HCT116 (cell line): ENCODE measurements at regions of chr19 and their contacts with region 1.

Region 1: GRCh38 chr19:51777570-51778462 is 16.8 kb downstream of the FPR2 start:
- DNase-seq: peak; percentile 83
- ATAC-seq: peak; percentile 95
- H3K4me3 ChIP-seq: no peak overlapping the region
- H3K27ac ChIP-seq: no peak overlapping the region
- H3K4me1 ChIP-seq: peaks cover 0 to 4% of the 10 kb centered on the region in 2 experiments; a peak in 1 of 4 replicates
- H3K27me3 ChIP-seq: no peaks in the 10 kb centered on the region
- CTCF ChIP-seq: peak; percentile 57 to 71 (median 71); a peak in 5 of 6 replicates
- POLR2A ChIP-seq: no peak
- RAD21 ChIP-seq: peak; percentile 83

Region 2: DNA sequence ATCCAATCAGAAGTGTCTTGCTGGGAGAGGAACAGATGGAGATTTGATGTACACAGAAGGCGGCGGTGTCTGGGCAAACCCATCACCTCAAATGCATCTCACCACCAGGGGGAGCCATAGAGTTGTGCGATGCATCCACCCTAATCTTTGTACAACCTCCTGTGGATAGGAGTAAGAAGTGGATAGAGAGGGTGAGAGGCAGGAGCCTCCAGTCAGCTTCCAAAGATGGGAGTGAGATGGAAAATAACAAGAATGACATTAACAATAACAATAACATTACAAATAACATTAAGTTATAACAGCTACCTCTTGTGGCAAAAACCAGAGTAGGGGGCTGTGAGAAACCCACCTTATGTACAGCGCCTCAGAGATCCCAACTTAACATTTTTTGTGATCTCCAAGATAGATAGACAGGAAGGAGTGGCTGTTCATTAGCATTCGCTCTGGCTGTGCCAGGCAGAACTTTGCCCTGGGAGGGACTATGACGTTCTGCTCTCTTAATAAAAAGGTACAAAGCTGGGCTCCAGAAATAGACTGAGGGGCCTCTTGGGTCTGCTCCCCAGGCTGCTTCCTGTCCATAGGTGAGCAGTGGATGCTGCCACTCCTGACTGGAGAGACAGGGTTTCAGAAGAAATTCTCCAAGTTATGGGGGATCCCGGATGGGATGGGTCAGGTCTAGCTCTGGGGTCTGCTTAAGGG is 304.7 kb before region 1 on chr19:
- CTCF ChIA-PET with region 1: interaction called, 12 read pairs
- POLR2A ChIA-PET with region 1: no interaction called
- RAD21 ChIA-PET with region 1: no interaction called
- intact Hi-C with region 1: loop called (anchors 1 kb)
- DNase-seq: peak; percentile 59
- ATAC-seq: peak; percentile 95
- H3K4me3 ChIP-seq: no peak overlapping the region
- H3K27ac ChIP-seq: no peak overlapping the region
- H3K4me1 ChIP-seq: peaks cover 4 to 13% of the 10 kb centered on the region in 2 experiments; a peak in 2 of 4 replicates
- H3K27me3 ChIP-seq: peaks cover 5% of the 10 kb centered on the region; the same call in 1 of the 2 replicates
- CTCF ChIP-seq: peak; percentile 79 to 85 (median 82)
- POLR2A ChIP-seq: no peak
- RAD21 ChIP-seq: peak; percentile 71

Region 3: DNA sequence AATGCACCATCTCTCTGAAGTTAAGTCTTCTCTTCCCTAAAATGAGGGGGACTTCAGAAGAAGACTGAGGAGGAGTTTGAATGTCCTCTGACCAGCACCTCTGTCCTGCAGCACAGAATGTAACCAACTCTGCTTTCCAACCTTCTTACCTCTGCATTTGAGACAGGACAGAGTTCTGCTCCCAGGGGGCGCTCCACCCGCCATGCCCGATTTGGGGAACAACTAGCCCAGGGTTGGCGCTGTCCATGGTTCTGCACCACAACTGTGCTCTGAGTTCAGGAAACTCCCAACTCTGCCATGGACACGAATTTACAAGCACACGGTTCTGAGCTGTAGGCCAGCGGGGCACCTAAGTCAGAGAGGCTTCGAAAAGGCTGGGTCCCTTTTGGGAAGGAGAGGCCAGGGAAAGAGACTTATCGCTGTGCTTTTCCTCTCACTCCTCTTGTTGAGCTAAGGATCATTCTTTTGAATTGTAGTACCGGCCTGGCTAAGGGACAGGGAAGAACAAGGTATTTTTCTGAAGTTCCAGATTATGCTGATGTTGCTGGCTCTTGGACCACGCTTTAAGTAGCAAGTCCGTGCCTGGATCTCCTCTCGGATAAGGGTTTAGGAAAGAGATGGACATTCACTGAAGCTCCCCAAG is 169.8 kb before region 1 on chr19:
- CTCF ChIA-PET with region 1: no interaction called
- POLR2A ChIA-PET with region 1: no interaction called
- RAD21 ChIA-PET with region 1: no interaction called
- intact Hi-C with region 1: loop called (anchors 5 kb)
- DNase-seq: peak; percentile 64
- ATAC-seq: peak; percentile 97
- H3K4me3 ChIP-seq: no peak overlapping the region
- H3K27ac ChIP-seq: no peak overlapping the region
- H3K4me1 ChIP-seq: no peaks in the 10 kb centered on the region
- H3K27me3 ChIP-seq: peaks cover 45% of the 10 kb centered on the region
- CTCF ChIP-seq: peak; percentile 72 to 93 (median 91); a peak in 5 of 6 replicates
- POLR2A ChIP-seq: no peak
- RAD21 ChIP-seq: peak; percentile 52

Region 4: GRCh38 chr19:51681321-51682168 is 96.3 kb before region 1 on chr19:
- CTCF ChIA-PET with region 1: no interaction called
- POLR2A ChIA-PET with region 1: no interaction called
- RAD21 ChIA-PET with region 1: no interaction called
- intact Hi-C with region 1: no loop called
- DNase-seq: no peak
- ATAC-seq: no peak; the same call in 1 of the 2 replicates
- H3K4me3 ChIP-seq: no peak overlapping the region
- H3K27ac ChIP-seq: no peak overlapping the region
- H3K4me1 ChIP-seq: peaks cover 7 to 9% of the 10 kb centered on the region in 2 experiments
- H3K27me3 ChIP-seq: no peaks in the 10 kb centered on the region
- CTCF ChIP-seq: no peak
- POLR2A ChIP-seq: no peak
- RAD21 ChIP-seq: no peak

Region 5: DNA sequence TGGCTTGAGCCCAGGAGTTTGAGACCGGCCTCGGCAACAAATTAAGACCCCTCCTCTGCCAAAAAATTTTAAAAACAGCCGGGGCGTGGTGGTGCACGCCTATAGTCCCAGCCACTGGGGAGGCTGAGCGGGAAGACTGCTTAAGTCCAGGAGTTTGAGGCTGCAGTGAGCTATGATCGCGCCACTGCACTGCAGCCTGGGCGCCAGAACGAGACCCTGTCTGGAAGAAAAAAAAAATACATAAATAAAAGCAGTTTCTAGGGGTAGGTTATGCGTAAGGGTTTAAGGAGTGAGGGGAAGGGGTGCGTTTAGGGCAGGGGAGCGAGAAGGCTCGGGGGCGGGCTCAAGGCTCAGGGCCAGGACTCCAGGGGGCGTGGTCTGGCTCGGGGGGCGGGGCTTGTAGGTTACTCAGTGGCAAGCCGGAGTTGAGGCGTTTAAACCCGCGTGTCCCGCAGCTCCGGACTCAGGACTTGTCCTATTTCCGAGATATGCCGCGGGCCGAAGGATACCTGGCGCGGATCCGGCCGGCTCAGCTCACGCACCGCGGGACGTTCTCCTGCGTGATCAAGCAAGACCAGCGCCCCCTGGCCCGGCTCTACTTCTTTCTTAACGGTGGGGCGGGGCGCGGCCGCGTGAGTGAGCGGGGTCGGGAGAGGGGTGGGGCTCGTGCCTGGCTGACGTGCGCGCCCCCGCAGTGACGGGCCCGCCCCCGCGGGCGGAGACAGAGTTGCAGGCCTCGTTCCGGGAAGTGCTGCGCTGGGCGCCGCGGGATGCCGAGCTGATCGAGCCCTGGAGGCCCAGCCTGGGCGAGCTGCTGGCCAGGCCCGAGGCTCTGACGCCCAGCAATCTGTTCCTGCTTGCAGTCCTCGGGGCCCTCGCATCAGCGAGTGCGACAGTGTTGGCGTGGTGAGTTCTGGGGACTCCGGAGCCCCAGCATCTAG is 74.0 kb before region 1 on chr19:
- CTCF ChIA-PET with region 1: interaction called, 13 read pairs
- POLR2A ChIA-PET with region 1: no interaction called
- RAD21 ChIA-PET with region 1: interaction called in 1 of 2 experiments, 3 read pairs
- intact Hi-C with region 1: no loop called
- DNase-seq: peak; percentile 80
- ATAC-seq: peak; percentile 88
- H3K4me3 ChIP-seq: peak overlapping the region; percentile 61 to 91
- H3K27ac ChIP-seq: peak overlapping the region; percentile 92
- H3K4me1 ChIP-seq: peaks cover 29 to 50% of the 10 kb centered on the region in 2 experiments; a peak in 3 of 4 replicates
- H3K27me3 ChIP-seq: no peaks in the 10 kb centered on the region
- CTCF ChIP-seq: peak in 2 of 3 experiments; percentile 44 to 55; a peak in 3 of 6 replicates
- POLR2A ChIP-seq: peak; percentile 86
- RAD21 ChIP-seq: no peak

Region 6: GRCh38 chr19:51712460-51713083 is 65.2 kb before region 1 on chr19:
- CTCF ChIA-PET with region 1: interaction called, 10 read pairs
- POLR2A ChIA-PET with region 1: no interaction called
- RAD21 ChIA-PET with region 1: no interaction called
- intact Hi-C with region 1: loop called (anchors 1 kb)
- DNase-seq: no peak
- ATAC-seq: peak; percentile 85
- H3K4me3 ChIP-seq: no peak overlapping the region
- H3K27ac ChIP-seq: no peak overlapping the region
- H3K4me1 ChIP-seq: peaks cover 8 to 14% of the 10 kb centered on the region in 2 experiments; a peak in 3 of 4 replicates
- H3K27me3 ChIP-seq: no peaks in the 10 kb centered on the region
- CTCF ChIP-seq: peak; percentile 57 to 73 (median 69); a peak in 5 of 6 replicates
- POLR2A ChIP-seq: no peak
- RAD21 ChIP-seq: peak; percentile 60

Region 7: GRCh38 chr19:51861870-51862622 is 84.2 kb after region 1 on chr19:
- CTCF ChIA-PET with region 1: no interaction called
- POLR2A ChIA-PET with region 1: no interaction called
- RAD21 ChIA-PET with region 1: no interaction called
- intact Hi-C with region 1: no loop called
- DNase-seq: no peak
- ATAC-seq: no peak
- H3K4me3 ChIP-seq: no peak overlapping the region
- H3K27ac ChIP-seq: no peak overlapping the region
- H3K4me1 ChIP-seq: no peaks in the 10 kb centered on the region
- H3K27me3 ChIP-seq: no peaks in the 10 kb centered on the region
- CTCF ChIP-seq: no peak
- POLR2A ChIP-seq: no peak
- RAD21 ChIP-seq: no peak

Region 8: DNA sequence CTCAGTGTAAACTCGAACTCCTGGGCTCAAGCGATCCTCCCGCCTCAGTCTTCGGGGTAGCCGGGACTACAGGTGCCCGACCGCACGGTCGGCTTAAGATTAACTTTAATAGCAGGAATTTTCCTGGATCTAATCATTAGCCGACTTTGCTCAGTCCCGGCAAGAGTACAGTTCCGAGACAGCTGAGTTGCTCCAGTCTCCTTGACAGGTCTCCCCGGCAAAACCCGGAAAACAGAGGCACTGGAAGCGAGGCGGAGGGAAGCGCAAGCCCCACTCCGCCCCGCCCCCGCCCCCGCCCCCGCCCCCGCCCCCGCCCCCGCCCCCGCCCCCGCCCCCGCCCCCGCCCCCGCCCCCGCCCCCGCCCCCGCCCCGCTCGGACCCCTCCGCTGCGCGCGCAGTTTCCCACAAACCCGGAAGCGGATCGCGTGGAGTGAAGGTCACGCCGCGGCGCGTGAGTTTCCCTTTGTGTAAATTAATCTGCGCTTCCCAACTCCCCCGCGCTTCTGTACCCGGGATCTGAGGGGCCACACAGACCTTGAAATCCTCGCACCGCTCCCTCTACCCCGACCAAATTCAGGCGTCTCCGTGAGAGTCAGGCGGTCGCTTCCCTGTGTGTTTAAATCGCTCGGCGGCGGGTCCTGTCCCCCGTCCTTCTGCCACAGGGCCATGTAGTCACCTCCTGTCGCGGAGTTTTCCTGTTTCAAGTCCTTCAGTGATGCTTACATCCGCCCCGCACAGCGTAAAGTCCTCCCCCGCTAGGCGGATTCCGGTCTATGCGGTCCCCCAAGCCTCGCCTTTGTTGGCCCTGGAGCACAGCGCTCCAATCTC is 519.2 kb after region 1 on chr19 and contains the start of gene ZNF480:
- CTCF ChIA-PET with region 1: no interaction called
- POLR2A ChIA-PET with region 1: no interaction called
- RAD21 ChIA-PET with region 1: no interaction called
- intact Hi-C with region 1: no loop called
- DNase-seq: peak; percentile 18
- ATAC-seq: peak; percentile 82
- H3K4me3 ChIP-seq: peak within 1 kb of the TSS; percentile 73 to 89
- H3K27ac ChIP-seq: peak within 1 kb of the TSS; percentile 64
- H3K4me1 ChIP-seq: peaks cover 0 to 12% of the 10 kb centered on the region in 2 experiments; a peak in 2 of 4 replicates
- H3K27me3 ChIP-seq: no peaks in the 10 kb centered on the region
- CTCF ChIP-seq: 0 out of 6 replicates have a peak, but pooled peaks of 1 of the 3 experiments have one; percentile 7
- POLR2A ChIP-seq: no peak
- RAD21 ChIP-seq: no peak
- total RNA-seq, gene ZNF480: 11.5 TPM